ENCODE measurements at regions of chr5 and their contacts with region 1.

Region 1: GRCh38 chr5:135466178-135467050 is 14.3 kb upstream of the TIFAB start:
- ATAC-seq: peak; percentile 89 to 97 (median 93)
- H3K4me3 ChIP-seq: peak overlapping the region in 1 of 5 donors; percentile 18
- H3K27ac ChIP-seq: no peak overlapping the region
- H3K4me1 ChIP-seq: peaks cover 23 to 34% of the 10 kb centered on the region in 2 donors

Region 2: GRCh38 chr5:135551593-135552447 is 85.4 kb after region 1 on chr5:
- in situ Hi-C with region 1: loop called (anchors 5 to 10 kb)
- ATAC-seq: peak; percentile 80 to 93 (median 88)
- H3K4me3 ChIP-seq: no peak overlapping the region
- H3K27ac ChIP-seq: no peak overlapping the region
- H3K4me1 ChIP-seq: peaks cover 3 to 5% of the 10 kb centered on the region in 2 donors

Region 3: DNA sequence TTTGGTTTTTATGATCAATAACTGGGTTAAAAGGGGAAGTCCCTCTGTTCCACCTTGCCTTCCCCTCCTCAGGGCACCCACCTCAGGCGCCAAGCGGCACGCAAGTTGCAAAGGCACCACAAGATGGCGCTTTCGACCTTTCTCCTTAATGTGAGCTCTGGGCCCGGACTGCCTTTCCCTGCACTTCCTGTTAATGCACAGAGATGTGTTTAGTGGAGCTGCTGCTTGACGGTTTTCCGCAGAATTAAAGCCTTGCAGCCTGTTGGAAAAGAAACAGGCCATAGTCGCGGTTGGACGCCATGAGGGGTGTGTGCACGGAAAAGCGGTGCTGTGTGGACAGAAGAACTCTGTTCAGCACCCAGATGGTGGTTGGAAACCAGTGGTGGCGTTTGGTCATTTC is 94.4 kb after region 1 on chr5:
- in situ Hi-C with region 1: loop called in 8 of 9 experiments (anchors 5 to 10 kb)
- ATAC-seq: peak; percentile 82 to 99 (median 92)
- H3K4me3 ChIP-seq: no peak overlapping the region
- H3K27ac ChIP-seq: no peak overlapping the region
- H3K4me1 ChIP-seq: peaks cover 15 to 17% of the 10 kb centered on the region in 2 donors

Region 4: GRCh38 chr5:135829681-135830383 is 363.4 kb after region 1 on chr5:
- in situ Hi-C with region 1: loop called in 4 of 9 experiments (anchors 10 to 25 kb)
- ATAC-seq: peak; percentile 57 to 69 (median 62)
- H3K4me3 ChIP-seq: no peak overlapping the region
- H3K27ac ChIP-seq: no peak overlapping the region
- H3K4me1 ChIP-seq: no peaks in the 10 kb centered on the region

Measured in motor neuron (in vitro differentiated cells).